Activated T-helper 1 cell treated with anti-CD3 and anti-CD28 coated beads, Interleukin-12 subunit alpha, Interleukin-12 subunit beta, Interleukin-2, Interleukin-4 antibody, amounts not matched to agents 30 ng/mL and 10 ng/mL and 1 ng/mL, durations not matched to agents 14 hours and 24 hours and 36 hours (primary cell): ENCODE measurements at regions of chr2 and their contacts with region 1.

Region 1: GRCh38 chr2:19863303-19864041 is 38.3 kb downstream of the TTC32 start:
- DNase-seq: peak; percentile 49
- H3K4me3 Mint-ChIP-seq: no peak overlapping the region
- H3K27ac Mint-ChIP-seq: no peak overlapping the region
- H3K4me1 Mint-ChIP-seq: peaks cover 31% of the 10 kb centered on the region
- H3K27me3 Mint-ChIP-seq: peaks cover 11% of the 10 kb centered on the region

Region 2: DNA sequence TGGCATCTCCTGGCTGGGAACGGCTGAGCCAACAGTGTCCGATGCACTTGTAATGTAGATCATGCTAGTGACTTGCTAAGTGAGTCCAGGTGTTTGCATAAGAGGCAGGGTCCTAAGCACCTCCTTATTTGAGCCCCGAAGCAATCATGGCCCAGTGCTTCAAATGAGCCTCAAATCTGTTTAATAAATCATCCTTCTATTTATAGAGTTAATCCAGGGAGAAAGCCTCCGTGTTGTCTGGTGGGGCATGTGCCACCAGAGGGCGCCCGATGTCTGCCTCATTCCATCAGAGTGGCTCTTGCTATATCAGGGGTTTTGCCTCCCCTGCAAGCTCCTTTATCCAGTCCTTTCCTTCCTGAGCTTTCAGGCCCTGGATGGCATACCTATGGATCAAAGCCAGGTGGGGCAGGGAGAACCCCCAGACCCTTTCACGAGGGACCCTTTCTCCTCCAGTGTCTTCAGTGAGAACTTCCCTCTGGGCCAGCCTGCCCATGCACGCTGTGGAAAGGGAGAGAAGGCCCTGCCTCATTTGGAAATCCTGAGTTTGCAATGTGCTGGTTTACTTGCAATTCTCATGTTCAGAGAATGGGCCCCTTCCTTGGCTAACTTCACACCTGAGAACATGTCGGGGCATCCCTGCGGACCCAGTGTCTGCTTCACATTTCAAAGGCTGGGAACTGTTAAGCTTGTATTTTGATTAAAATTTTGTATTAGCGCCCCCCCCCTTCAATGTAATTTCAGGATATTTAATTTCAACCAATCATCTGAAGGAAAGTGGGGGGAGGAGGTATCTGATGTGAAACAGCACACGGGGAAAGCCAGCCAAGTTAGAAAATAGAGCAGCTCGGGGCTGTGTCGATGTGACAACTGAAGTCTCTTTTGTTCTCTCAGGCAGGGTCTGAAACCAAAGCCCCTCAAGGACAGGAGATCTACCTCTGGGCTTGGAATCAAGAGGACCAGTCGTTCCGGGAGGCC is 1342.7 kb before region 1 on chr2:
- intact Hi-C with region 1: loop called (anchors 1 kb)
- DNase-seq: peak; percentile 46
- H3K4me3 Mint-ChIP-seq: no peak overlapping the region
- H3K27ac Mint-ChIP-seq: no peak overlapping the region
- H3K4me1 Mint-ChIP-seq: no peaks in the 10 kb centered on the region
- H3K27me3 Mint-ChIP-seq: peaks cover 8% of the 10 kb centered on the region

Region 3: GRCh38 chr2:18749912-18750526 is 1113.5 kb before region 1 on chr2:
- intact Hi-C with region 1: loop called (anchors 1 kb)
- DNase-seq: no peak
- H3K4me3 Mint-ChIP-seq: no peak overlapping the region
- H3K27ac Mint-ChIP-seq: no peak overlapping the region
- H3K4me1 Mint-ChIP-seq: no peaks in the 10 kb centered on the region
- H3K27me3 Mint-ChIP-seq: no peaks in the 10 kb centered on the region

Region 4: GRCh38 chr2:19362755-19363473 is 500.6 kb before region 1 on chr2:
- intact Hi-C with region 1: loop called (anchors 5 kb)
- DNase-seq: no peak
- H3K4me3 Mint-ChIP-seq: peak overlapping the region; percentile 90
- H3K27ac Mint-ChIP-seq: no peak overlapping the region
- H3K4me1 Mint-ChIP-seq: peaks cover 24% of the 10 kb centered on the region
- H3K27me3 Mint-ChIP-seq: peaks cover 94% of the 10 kb centered on the region

Region 5: DNA sequence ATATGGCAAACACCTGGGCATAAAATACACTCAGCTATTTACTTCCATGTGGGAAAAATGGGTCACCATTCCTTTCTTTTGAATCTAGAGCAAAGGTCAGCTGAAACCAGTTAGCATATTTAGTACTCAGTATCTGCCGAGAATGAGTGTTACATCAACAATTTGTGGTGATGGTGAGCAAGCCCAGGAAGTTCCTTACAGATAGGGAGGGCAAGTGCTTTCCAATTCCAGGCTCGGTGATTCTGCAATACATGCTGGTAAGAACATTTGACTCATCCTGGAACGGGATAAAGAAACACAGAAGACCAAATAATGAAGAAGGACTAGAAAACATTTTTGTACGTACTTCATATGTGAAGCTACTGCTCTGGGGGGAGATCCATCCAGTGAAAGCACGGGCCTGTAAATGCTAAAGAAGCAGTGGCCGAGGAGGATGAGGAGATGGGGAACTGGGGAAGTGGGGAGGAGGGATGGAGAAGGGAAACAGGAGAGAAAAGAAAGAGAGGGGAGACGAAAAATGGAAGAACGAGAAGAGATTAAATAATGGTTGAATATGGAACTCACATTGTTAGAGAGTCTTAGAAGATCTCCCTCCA is 213.6 kb before region 1 on chr2:
- intact Hi-C with region 1: no loop called
- DNase-seq: no peak
- H3K4me3 Mint-ChIP-seq: no peak overlapping the region
- H3K27ac Mint-ChIP-seq: no peak overlapping the region
- H3K4me1 Mint-ChIP-seq: no peaks in the 10 kb centered on the region
- H3K27me3 Mint-ChIP-seq: no peaks in the 10 kb centered on the region

Region 6: DNA sequence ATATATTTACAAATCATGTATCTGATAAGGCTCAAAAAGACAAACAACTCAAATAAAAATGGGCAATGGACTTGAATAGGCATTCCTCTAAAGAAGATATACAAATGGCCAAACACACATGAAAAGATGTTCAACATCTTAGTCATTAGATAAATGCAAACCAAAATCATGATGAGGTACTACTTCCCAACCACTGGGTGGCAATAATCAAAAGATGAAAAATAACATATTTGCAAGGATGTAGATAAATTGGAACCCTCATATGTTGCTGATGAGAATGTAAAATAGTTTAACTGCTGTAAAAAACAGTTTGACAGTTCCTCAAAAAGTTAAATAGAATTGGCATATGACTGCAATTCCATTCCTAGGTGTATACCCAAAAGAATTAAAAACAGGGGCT is 94.0 kb before region 1 on chr2:
- intact Hi-C with region 1: loop called (anchors 5 kb)
- DNase-seq: no peak
- H3K4me3 Mint-ChIP-seq: no peak overlapping the region
- H3K27ac Mint-ChIP-seq: no peak overlapping the region
- H3K4me1 Mint-ChIP-seq: no peaks in the 10 kb centered on the region
- H3K27me3 Mint-ChIP-seq: peaks cover 5% of the 10 kb centered on the region

Region 7: GRCh38 chr2:21025690-21026478 is 1162.4 kb after region 1 on chr2:
- intact Hi-C with region 1: no loop called
- DNase-seq: no peak
- H3K4me3 Mint-ChIP-seq: no peak overlapping the region
- H3K27ac Mint-ChIP-seq: no peak overlapping the region
- H3K4me1 Mint-ChIP-seq: no peaks in the 10 kb centered on the region
- H3K27me3 Mint-ChIP-seq: peaks cover 4% of the 10 kb centered on the region